WTC11 (cell line): ENCODE measurements at regions of chr11 and their contacts with region 1.

Region 1: GRCh38 chr11:7571640-7572000 is 57.8 kb downstream of the PPFIBP2 start:
- DNase-seq: peak; percentile 86
- ATAC-seq: peak; percentile 84
- H3K4me3 Mint-ChIP-seq: no peak overlapping the region
- H3K27ac Mint-ChIP-seq: peak overlapping the region; percentile 58; the same call in 1 of the 2 replicates
- H3K4me1 Mint-ChIP-seq: peaks cover 64% of the 10 kb centered on the region
- H3K27me3 Mint-ChIP-seq: no peaks in the 10 kb centered on the region
- CTCF ChIP-seq: peak; percentile 74; the same call in 1 of the 2 replicates

Region 2: DNA sequence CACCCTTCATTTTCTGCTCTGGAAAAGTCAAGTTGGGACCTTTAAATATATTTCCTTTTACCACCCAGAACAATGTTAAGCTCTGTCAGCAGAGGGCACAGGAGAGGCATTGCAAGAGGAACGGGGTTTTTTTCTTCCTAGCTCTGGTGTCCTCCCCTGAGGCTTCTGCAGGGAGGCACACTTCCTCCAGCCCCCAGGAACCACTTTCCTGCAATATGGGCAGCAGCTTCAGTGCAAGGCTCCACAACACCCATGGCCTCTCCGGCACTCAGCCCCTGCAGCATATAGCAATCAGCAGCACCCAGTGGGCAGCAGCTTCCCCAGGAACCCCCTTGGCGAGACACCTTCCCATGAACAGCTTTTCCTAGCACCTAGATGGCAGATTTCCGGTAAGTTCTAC is 218.5 kb before region 1 on chr11:
- CTCF ChIA-PET with region 1: interaction called, 14 read pairs
- POLR2A ChIA-PET with region 1: no interaction called
- DNase-seq: peak; percentile 41
- ATAC-seq: peak; percentile 96
- H3K4me3 Mint-ChIP-seq: no peak overlapping the region
- H3K27ac Mint-ChIP-seq: no peak overlapping the region
- H3K4me1 Mint-ChIP-seq: peaks cover 14% of the 10 kb centered on the region; the same call in 1 of the 2 replicates
- H3K27me3 Mint-ChIP-seq: no peaks in the 10 kb centered on the region; the same call in 1 of the 2 replicates
- CTCF ChIP-seq: 0 out of 2 replicates have a peak, but pooled peaks have one; percentile 37

Region 3: GRCh38 chr11:7531011-7531410 is 40.6 kb before region 1 on chr11:
- CTCF ChIA-PET with region 1: no interaction called
- POLR2A ChIA-PET with region 1: no interaction called
- DNase-seq: no peak
- ATAC-seq: no peak
- H3K4me3 Mint-ChIP-seq: no peak overlapping the region
- H3K27ac Mint-ChIP-seq: no peak overlapping the region
- H3K4me1 Mint-ChIP-seq: peaks cover 6% of the 10 kb centered on the region
- H3K27me3 Mint-ChIP-seq: no peaks in the 10 kb centered on the region; the same call in 1 of the 2 replicates
- CTCF ChIP-seq: no peak

Region 4: DNA sequence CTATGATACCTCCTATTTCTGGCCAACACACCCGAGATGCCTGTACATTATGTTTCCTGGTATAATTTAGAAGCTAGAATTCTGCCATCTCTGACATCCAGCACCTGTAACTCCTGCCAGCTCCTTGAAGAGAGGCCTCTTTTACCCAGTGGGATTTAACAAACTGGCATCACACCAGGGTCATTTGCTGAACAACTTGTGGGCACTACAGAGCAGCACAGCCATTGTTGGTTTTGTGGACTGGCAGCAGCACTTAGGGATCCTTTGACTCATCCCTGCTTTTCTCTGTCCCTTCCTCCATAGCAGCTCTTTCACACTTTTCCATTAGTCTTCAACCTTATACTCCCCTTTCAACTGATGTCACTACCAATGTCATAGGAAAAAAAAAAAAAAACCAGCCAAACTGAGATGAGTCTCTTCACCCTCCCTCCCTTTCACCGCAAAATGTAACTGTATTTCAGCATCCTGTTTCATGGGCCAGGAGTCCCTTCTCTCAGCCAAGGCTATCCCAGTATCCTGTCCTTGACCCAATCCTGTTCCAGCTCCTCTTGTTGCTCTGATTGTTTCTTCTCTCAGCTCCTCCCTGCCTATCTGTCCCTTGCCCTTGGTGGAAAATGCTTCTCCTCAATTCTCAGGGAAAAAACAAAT is 10.8 kb after region 1 on chr11:
- CTCF ChIA-PET with region 1: interaction called, 44 read pairs
- POLR2A ChIA-PET with region 1: no interaction called
- DNase-seq: no peak
- ATAC-seq: no peak
- H3K4me3 Mint-ChIP-seq: no peak overlapping the region
- H3K27ac Mint-ChIP-seq: peak overlapping the region; percentile 23; the same call in 1 of the 2 replicates
- H3K4me1 Mint-ChIP-seq: peaks cover 45% of the 10 kb centered on the region
- H3K27me3 Mint-ChIP-seq: no peaks in the 10 kb centered on the region
- CTCF ChIP-seq: no peak

Region 5: DNA sequence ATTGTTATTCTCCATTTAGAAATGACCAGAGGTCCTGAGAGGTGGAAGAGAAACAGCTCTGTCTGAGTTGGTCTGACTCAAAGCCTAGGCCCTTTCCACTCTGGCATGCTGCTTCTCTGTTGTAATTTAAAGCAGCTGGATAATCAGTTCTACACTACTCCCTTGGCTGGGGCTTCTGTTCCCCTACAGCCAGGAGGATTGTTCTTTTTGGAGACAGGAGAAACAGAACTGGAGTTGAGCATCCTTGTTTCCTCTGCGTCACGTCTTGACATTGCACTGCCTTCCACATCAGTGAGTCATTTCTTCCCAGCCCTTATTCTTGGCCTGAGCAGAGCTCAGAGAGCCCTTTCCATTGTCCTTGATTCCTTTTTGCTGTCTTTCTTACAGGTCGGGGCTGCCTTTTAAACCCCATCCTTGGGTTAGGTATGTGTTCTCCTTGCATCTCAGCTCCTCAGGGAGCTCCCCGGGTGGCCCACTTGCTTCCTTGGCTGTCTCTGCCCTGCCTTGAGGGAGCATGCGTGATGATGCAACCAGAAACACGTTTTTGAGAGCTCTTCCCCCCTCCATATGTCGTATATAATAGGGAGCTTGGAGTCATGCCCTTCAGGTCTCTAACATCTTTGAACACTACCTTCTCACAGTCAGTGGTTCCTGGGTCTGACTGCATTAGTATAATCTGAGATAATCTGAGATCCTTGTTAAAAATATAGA is 66.0 kb after region 1 on chr11:
- CTCF ChIA-PET with region 1: interaction called, 31 read pairs
- POLR2A ChIA-PET with region 1: no interaction called
- DNase-seq: no peak
- ATAC-seq: no peak
- H3K4me3 Mint-ChIP-seq: no peak overlapping the region
- H3K27ac Mint-ChIP-seq: no peak overlapping the region
- H3K4me1 Mint-ChIP-seq: peaks cover 42% of the 10 kb centered on the region
- H3K27me3 Mint-ChIP-seq: no peaks in the 10 kb centered on the region
- CTCF ChIP-seq: no peak

Region 6: GRCh38 chr11:7665473-7666291 is 94.1 kb after region 1 on chr11:
- CTCF ChIA-PET with region 1: interaction called, 34 read pairs
- POLR2A ChIA-PET with region 1: no interaction called
- DNase-seq: peak; percentile 89
- ATAC-seq: peak; percentile 99
- H3K4me3 Mint-ChIP-seq: no peak overlapping the region
- H3K27ac Mint-ChIP-seq: no peak overlapping the region
- H3K4me1 Mint-ChIP-seq: peaks cover 9% of the 10 kb centered on the region; the same call in 1 of the 2 replicates
- H3K27me3 Mint-ChIP-seq: peaks cover 8% of the 10 kb centered on the region; the same call in 1 of the 2 replicates
- CTCF ChIP-seq: peak; percentile 94